ENCODE measurements at regions of chr9 and their contacts with region 1.

Region 1: DNA sequence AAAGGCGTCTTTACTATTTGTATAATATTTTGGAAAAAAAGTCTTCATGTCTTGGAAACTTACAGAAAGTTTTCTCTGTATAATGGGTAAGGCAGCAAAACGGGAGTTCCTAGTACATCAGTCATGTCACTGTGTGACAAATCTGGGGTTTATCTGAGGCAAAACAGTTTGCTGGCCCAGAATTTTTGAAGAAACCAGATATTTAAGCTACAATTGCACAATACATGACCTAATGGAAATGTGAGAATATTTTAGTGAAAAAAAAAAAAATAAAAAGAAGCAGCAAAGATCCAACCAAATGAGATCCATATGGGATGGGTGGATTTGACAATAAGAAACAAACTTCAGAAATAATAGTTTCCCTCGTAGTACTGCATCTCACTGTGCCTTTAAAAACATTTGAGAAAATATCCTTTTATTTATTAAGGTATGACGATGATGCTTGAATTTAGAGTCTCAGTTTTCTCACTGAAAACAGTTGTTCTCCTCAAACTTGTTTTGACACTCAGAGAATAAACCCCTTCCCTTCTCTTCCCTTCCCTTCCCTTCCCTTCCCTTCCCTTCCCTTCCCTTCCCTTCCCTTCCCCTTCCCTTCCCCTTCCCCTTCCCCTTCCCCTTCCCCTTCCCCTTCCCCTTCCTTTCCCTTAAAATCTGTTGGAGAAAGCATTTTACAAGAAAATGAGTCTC is 180.5 kb upstream of the TUT7 start:
- DNase-seq: peak; percentile 83
- ATAC-seq: peak; percentile 73
- H3K4me3 ChIP-seq: no peak overlapping the region
- H3K27ac ChIP-seq: peak overlapping the region; percentile 91; the same call in 1 of the 2 replicates
- H3K4me1 ChIP-seq: peaks cover 7% of the 10 kb centered on the region; the same call in 1 of the 2 replicates
- H3K27me3 ChIP-seq: no peaks in the 10 kb centered on the region
- CTCF ChIP-seq: no peak
- POLR2A ChIP-seq: no peak
- RAD21 ChIP-seq: no peak

Region 2: GRCh38 chr9:86549401-86549811 is 14.7 kb after region 1 on chr9:
- CTCF ChIA-PET with region 1: no interaction called
- POLR2A ChIA-PET with region 1: interaction called, 12 read pairs
- dilution Hi-C with region 1: no loop called
- in situ Hi-C with region 1: no loop called
- intact Hi-C with region 1: no loop called
- DNase-seq: peak; percentile 99
- ATAC-seq: peak; percentile 92
- H3K4me3 ChIP-seq: no peak overlapping the region
- H3K27ac ChIP-seq: peak overlapping the region; percentile 61; the same call in 1 of the 2 replicates
- H3K4me1 ChIP-seq: peaks cover 14% of the 10 kb centered on the region
- H3K27me3 ChIP-seq: no peaks in the 10 kb centered on the region
- CTCF ChIP-seq: no peak
- POLR2A ChIP-seq: no peak
- RAD21 ChIP-seq: peak; percentile 1; the same call in 1 of the 2 replicates